Activated T-helper 2 cell treated with anti-CD3 and anti-CD28 coated beads, Interferon-gamma antibody, Interleukin-2, Interleukin-4, amounts not matched to agents 10 μg/mL and 5 μg/mL and 100 μg/mL, durations not matched to agents 14 hours and 24 hours and 36 hours (primary cell): ENCODE measurements at regions of chr4 and their contacts with region 1.

Region 1: DNA sequence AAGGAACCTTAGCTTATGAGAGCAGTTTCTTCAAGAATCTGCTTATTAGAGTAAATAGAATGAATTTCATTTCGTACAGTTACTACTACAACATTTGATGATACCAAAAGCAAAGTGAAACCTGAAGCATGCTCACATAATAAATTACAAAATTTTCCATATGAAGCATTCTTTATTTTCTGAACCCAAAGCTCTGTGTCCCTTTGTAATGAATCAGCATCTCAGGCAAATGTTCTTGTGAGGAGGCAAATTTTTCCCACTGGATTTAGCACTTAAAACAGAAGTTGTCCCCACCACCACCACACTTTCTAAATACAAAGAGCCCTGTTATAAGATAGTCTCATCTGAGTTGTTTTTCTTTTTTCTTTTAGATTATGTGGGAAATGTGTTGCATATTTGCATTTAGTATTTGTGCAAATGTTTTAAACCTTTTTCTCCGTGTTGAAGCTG is 70.7 kb upstream of the NFKB1 start:
- DNase-seq: no peak
- H3K4me3 Mint-ChIP-seq: peak overlapping the region; percentile 87
- H3K27ac Mint-ChIP-seq: peak overlapping the region; percentile 86
- H3K4me1 Mint-ChIP-seq: peaks cover 16% of the 10 kb centered on the region
- H3K27me3 Mint-ChIP-seq: peaks cover 6% of the 10 kb centered on the region

Region 2: GRCh38 chr4:102255454-102255853 is 175.0 kb before region 1 on chr4:
- intact Hi-C with region 1: loop called (anchors 1 kb)
- DNase-seq: no peak
- H3K4me3 Mint-ChIP-seq: no peak overlapping the region
- H3K27ac Mint-ChIP-seq: no peak overlapping the region
- H3K4me1 Mint-ChIP-seq: peaks cover 5% of the 10 kb centered on the region
- H3K27me3 Mint-ChIP-seq: no peaks in the 10 kb centered on the region

Region 3: DNA sequence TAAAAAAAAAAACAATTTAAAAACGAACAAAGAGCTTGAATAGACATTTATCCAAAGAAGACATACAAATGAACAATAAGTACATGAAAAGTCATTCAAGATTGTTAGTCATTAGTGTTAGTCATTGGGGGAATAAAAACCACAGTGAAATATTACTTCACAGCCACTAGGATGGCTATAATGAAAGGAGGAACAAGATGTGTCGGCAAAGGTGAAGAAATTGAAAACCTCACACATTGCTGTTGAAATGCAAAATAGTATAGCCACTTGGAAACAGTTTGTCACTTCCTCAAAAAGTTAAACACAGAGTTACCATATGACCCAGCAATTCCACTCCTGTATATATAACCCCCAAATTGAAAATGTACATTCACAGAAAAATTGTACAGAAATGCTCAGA is 40.0 kb before region 1 on chr4:
- intact Hi-C with region 1: loop called (anchors 1 kb)
- DNase-seq: no peak
- H3K4me3 Mint-ChIP-seq: no peak overlapping the region
- H3K27ac Mint-ChIP-seq: peak overlapping the region; percentile 44
- H3K4me1 Mint-ChIP-seq: peaks cover 23% of the 10 kb centered on the region
- H3K27me3 Mint-ChIP-seq: peaks cover 10% of the 10 kb centered on the region

Region 4: DNA sequence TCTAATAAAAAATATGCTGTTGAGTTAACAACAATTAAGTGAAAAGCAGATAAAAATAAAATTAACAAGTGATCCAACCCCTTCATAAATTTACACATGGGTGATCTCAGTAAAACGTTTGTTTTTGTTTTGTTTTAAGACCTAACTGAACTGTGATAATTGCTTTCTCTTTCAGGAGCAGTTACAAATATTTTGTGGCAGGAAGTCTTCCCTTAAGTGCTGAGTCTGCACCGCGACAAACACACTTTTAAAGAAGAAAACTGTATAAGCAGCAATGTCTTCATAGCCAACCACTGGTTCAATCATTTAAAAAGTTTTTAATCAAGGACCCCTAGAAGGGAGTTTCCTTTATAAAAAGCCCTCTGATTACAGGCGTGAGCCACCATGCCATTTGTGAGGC is 16.9 kb after region 1 on chr4:
- intact Hi-C with region 1: no loop called
- DNase-seq: no peak
- H3K4me3 Mint-ChIP-seq: no peak overlapping the region
- H3K27ac Mint-ChIP-seq: no peak overlapping the region
- H3K4me1 Mint-ChIP-seq: peaks cover 55% of the 10 kb centered on the region
- H3K27me3 Mint-ChIP-seq: no peaks in the 10 kb centered on the region

Region 5: GRCh38 chr4:102578819-102579218 is 148.3 kb after region 1 on chr4:
- intact Hi-C with region 1: no loop called
- DNase-seq: no peak
- H3K4me3 Mint-ChIP-seq: no peak overlapping the region
- H3K27ac Mint-ChIP-seq: peak overlapping the region; percentile 25
- H3K4me1 Mint-ChIP-seq: peaks cover 59% of the 10 kb centered on the region
- H3K27me3 Mint-ChIP-seq: no peaks in the 10 kb centered on the region

Region 6: DNA sequence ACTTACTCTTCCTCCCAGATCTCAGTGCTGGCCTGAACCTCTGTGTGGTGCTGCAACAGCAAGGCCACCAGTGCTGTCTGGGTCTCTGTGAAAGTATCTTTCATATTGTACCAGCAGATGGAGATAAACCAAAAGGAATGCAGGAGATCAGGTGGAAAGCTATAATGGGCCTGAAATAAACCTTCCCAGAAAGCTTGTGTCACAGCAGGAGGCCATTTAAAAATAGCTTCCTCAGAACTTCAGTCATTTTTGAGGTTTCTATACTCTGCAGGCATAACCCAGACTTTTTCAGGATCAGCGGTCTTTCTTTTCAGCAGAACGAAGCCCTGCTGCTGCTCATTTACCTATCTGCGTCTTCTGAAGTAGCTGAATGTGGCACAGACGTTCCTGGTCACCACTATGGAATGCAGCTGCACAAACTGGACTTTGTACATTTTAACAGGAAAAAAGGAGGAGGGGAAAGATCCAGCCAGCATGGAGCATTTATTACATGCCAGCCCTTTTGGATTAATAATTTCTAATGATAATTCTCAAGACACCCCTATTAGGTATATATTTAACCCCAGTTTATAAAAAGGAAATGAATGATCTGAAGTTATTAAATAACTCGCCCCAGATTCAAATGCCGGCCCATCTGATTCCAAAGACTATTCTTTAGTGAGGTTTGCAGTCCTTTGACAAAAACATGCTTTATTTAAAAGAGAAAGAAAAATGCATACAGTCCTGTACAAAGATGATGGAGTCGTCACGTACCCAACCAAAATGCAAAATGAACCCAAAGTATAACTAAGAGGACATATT is 190.4 kb after region 1 on chr4:
- intact Hi-C with region 1: loop called (anchors 1 kb)
- DNase-seq: no peak
- H3K4me3 Mint-ChIP-seq: no peak overlapping the region
- H3K27ac Mint-ChIP-seq: peak overlapping the region; percentile 58
- H3K4me1 Mint-ChIP-seq: peaks cover 49% of the 10 kb centered on the region
- H3K27me3 Mint-ChIP-seq: no peaks in the 10 kb centered on the region

Region 7: DNA sequence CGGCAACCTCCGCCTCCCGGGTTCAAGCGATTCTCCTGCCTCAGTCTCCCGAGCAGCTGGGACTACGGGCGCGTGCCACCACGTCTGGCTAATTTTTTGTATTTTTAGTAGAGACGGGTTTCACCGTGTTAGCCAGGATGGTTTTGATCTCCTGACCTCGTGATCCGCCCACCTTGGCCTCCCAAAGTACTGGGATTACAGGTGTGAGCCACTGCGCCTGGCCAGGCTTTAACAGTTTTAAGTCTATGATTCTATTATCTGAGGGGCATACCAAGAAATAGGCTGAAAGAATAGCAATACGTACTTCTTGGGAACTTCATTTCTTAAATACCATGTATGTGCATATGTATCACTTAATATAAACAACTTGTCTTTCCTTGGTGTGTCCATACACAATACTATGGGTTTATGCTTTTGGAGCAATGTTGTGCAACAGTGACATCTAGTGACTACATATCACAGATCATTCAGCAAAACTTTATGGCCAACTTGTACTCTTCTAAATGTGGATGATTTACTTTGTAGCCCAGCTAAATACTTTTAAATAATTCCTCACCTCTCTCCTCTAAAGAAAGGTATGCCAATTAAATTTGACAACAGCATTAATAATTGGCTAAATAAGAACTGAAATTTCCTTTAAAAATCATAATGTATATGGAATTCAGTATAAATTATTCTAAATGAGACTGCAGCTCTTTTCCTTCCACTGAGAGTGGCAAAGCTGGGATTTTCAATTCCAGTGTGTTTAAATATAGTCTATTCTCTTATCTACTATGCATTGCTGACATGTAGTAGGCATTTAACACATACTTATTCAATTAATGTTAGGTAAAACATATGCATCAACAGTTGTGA is 578.6 kb after region 1 on chr4:
- intact Hi-C with region 1: loop called (anchors 1 kb)
- DNase-seq: no peak
- H3K4me3 Mint-ChIP-seq: no peak overlapping the region
- H3K27ac Mint-ChIP-seq: no peak overlapping the region
- H3K4me1 Mint-ChIP-seq: peaks cover 6% of the 10 kb centered on the region
- H3K27me3 Mint-ChIP-seq: peaks cover 10% of the 10 kb centered on the region

Region 8: GRCh38 chr4:103091601-103092223 is 661.2 kb after region 1 on chr4:
- intact Hi-C with region 1: loop called (anchors 2 kb)
- DNase-seq: peak; percentile 33
- H3K4me3 Mint-ChIP-seq: peak overlapping the region; percentile 54
- H3K27ac Mint-ChIP-seq: peak overlapping the region; percentile 65
- H3K4me1 Mint-ChIP-seq: peaks cover 24% of the 10 kb centered on the region
- H3K27me3 Mint-ChIP-seq: no peaks in the 10 kb centered on the region

Region 9: GRCh38 chr4:103099691-103100392 is 669.4 kb after region 1 on chr4 and contains the start of gene BDH2:
- intact Hi-C with region 1: loop called (anchors 1 kb)
- DNase-seq: peak; percentile 31
- H3K4me3 Mint-ChIP-seq: peak within 1 kb of the TSS; percentile 85
- H3K27ac Mint-ChIP-seq: peak within 1 kb of the TSS; percentile 85
- H3K4me1 Mint-ChIP-seq: peaks cover 20% of the 10 kb centered on the region
- H3K27me3 Mint-ChIP-seq: no peaks in the 10 kb centered on the region
- total RNA-seq, gene BDH2: 16.0 and 16.3 TPM in 2 replicates